Calu3 (cell line): ENCODE measurements at regions of chr5 and their contacts with region 1.

Region 1: DNA sequence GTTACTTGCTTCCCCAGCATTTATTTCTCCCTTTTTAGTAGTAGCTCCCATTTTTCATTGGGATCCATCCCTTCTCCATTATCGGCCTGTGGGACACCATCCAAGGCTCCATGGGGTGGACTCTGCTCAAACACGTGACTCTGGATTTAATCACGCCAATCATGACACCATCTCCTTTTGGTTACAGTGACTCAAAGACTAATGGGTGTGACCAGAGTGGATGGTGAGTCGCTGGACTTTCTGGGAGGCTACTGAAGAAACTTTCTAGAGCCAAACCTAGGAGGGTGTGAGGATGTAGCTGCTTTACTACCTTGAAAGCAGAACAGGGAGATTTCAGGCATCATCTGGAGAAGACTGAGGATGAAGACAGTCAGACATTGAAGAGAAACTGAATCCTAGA is 93.1 kb downstream of the PJA2 start:
- DNase-seq: no peak
- H3K4me3 Mint-ChIP-seq: no peak overlapping the region
- H3K27ac Mint-ChIP-seq: peak overlapping the region; percentile 25
- H3K4me1 Mint-ChIP-seq: peaks cover 27% of the 10 kb centered on the region
- H3K27me3 Mint-ChIP-seq: no peaks in the 10 kb centered on the region
- CTCF ChIP-seq: no peak

Region 2: DNA sequence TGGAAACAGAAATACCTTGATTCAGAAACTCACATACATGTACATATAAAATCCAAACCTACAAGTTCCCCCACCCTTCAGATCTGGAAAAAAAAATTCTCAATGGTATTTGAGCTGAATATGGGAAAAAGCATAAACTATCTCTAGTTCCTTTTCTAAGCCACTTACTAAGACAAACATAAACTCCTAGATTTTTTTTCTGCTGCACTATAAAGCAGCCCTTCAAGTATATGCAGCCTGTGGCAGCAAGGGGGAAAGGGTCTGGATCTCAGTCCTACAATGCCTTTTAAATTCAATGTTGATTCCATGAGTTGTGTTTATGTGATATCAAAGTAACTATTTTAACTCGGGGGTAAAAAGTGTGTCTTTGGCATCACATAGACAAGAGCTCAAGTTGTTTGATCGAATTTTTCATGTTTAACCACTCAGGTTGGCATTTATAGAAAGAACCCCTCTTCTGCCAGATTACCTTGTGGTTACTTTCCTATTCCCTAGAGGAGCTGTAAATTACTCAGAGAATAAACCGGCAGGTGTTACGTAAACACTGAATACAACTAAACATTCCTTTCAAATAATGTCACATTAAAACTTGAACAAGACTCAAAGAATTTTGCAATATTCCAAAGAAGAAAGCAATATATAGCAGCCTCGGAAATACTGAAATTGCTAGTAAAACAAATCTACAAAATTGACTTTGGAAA is 660.7 kb before region 1 on chr5:
- CTCF ChIA-PET with region 1: no interaction called
- intact Hi-C with region 1: loop called (anchors 10 kb)
- DNase-seq: no peak
- H3K4me3 Mint-ChIP-seq: no peak overlapping the region
- H3K27ac Mint-ChIP-seq: peak overlapping the region; percentile 48
- H3K4me1 Mint-ChIP-seq: peaks cover 44% of the 10 kb centered on the region
- H3K27me3 Mint-ChIP-seq: no peaks in the 10 kb centered on the region
- CTCF ChIP-seq: no peak

Region 3: DNA sequence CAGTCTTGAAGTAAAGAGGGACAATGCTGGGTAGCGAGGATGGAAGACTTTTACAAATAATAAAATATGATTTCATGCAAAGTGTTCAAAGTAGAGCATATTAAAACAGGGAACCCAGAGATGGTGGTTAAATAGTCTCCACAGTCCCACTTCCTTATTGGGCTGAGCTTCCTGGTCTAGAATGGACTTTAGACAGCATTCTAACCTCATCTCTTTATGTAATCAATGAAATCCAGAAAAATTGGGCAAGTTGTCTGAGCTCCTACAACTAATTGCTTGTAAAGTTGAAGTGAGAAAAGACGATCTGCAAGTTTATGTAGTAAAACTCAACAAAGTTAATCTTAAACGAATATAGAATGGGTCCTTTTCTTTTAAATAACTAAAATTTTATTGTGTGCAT is 235.7 kb before region 1 on chr5:
- CTCF ChIA-PET with region 1: no interaction called
- intact Hi-C with region 1: loop called (anchors 2 kb)
- DNase-seq: no peak
- H3K4me3 Mint-ChIP-seq: no peak overlapping the region
- H3K27ac Mint-ChIP-seq: peak overlapping the region; percentile 27
- H3K4me1 Mint-ChIP-seq: peaks cover 16% of the 10 kb centered on the region
- H3K27me3 Mint-ChIP-seq: no peaks in the 10 kb centered on the region
- CTCF ChIP-seq: no peak